Panc1 (cell line): ENCODE measurements at regions of chr7 and their contacts with region 1.

Region 1: GRCh38 chr7:32479574-32480200 is 10.5 kb downstream of the LSM5 start:
- DNase-seq: no peak
- ATAC-seq: peak; percentile 49; the same call in 1 of the 2 replicates
- H3K4me3 ChIP-seq: no peak overlapping the region
- H3K27ac ChIP-seq: no peak overlapping the region
- H3K4me1 ChIP-seq: no peaks in the 10 kb centered on the region; the same call in 1 of the 2 replicates
- H3K27me3 ChIP-seq: no peaks in the 10 kb centered on the region; the same call in 1 of the 2 replicates
- CTCF ChIP-seq: peak; percentile 99

Region 2: GRCh38 chr7:31744294-31744874 is 735.3 kb before region 1 on chr7:
- CTCF ChIA-PET with region 1: no interaction called
- POLR2A ChIA-PET with region 1: no interaction called
- in situ Hi-C with region 1: no loop called
- intact Hi-C with region 1: loop called (anchors 2 kb)
- DNase-seq: peak; percentile 59
- ATAC-seq: peak; percentile 87
- H3K4me3 ChIP-seq: no peak overlapping the region
- H3K27ac ChIP-seq: no peak overlapping the region
- H3K4me1 ChIP-seq: no peaks in the 10 kb centered on the region
- H3K27me3 ChIP-seq: peaks cover 13% of the 10 kb centered on the region
- CTCF ChIP-seq: peak; percentile 83

Region 3: GRCh38 chr7:32347244-32347828 is 132.4 kb before region 1 on chr7:
- CTCF ChIA-PET with region 1: no interaction called
- POLR2A ChIA-PET with region 1: no interaction called
- in situ Hi-C with region 1: no loop called
- intact Hi-C with region 1: loop called (anchors 5 kb)
- DNase-seq: peak; percentile 12
- ATAC-seq: no peak
- H3K4me3 ChIP-seq: no peak overlapping the region
- H3K27ac ChIP-seq: no peak overlapping the region
- H3K4me1 ChIP-seq: no peaks in the 10 kb centered on the region
- H3K27me3 ChIP-seq: no peaks in the 10 kb centered on the region
- CTCF ChIP-seq: peak; percentile 84

Region 4: GRCh38 chr7:32531402-32531801 is 51.7 kb after region 1 on chr7:
- CTCF ChIA-PET with region 1: no interaction called
- POLR2A ChIA-PET with region 1: interaction called, 23 read pairs
- in situ Hi-C with region 1: no loop called
- intact Hi-C with region 1: no loop called
- DNase-seq: no peak
- ATAC-seq: no peak
- H3K4me3 ChIP-seq: no peak overlapping the region
- H3K27ac ChIP-seq: no peak overlapping the region
- H3K4me1 ChIP-seq: no peaks in the 10 kb centered on the region
- H3K27me3 ChIP-seq: no peaks in the 10 kb centered on the region
- CTCF ChIP-seq: no peak